ENCODE measurements at regions of chr17 and their contacts with region 1.

Region 1: DNA sequence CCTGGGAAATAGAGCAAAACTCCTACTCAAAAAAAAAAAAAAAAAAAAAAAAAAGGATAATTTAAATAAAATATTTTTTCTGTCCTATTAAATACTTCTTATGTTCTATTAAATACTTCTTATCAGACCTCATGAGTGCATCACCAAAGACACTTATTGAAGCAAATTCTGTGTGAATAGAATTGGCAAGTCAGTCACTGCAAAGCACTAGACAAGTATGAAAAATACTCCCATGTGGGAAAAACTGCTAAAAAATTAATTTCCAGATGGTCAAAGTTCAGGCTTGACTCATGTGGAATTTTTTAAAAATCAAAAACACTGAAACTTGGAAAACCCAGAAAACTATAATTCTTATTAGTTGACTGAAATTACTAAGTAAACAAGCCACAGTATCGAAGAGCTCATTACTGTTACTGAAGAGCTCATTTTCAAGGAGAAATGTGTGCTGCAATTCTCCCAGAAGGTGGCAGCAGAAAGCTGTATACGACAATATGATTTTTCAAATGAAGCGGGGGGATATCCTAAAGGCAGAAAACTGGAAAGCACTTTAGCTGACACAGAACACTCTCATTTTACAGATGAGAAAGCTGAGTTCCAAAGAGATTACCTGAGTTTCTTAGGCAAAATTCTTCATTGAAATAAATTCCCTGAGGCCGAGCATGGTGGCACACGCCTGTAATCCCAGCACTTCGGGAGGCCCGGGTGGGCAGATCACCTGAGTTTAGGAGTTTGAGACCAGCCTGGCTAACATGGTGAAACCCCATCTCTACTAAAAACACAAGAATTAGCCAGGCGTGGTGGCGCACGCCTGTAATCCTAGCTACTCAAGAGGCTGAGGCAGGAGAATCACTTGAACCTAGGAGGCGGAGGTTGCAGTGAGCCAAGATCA is 15.9 kb upstream of the FBXO47 start:
- DNase-seq: no peak
- ATAC-seq: peak; percentile 77

Region 2: GRCh38 chr17:38922538-38923297 is 60.4 kb before region 1 on chr17:
- intact Hi-C with region 1: no loop called
- DNase-seq: no peak
- ATAC-seq: peak; percentile 60

Region 3: DNA sequence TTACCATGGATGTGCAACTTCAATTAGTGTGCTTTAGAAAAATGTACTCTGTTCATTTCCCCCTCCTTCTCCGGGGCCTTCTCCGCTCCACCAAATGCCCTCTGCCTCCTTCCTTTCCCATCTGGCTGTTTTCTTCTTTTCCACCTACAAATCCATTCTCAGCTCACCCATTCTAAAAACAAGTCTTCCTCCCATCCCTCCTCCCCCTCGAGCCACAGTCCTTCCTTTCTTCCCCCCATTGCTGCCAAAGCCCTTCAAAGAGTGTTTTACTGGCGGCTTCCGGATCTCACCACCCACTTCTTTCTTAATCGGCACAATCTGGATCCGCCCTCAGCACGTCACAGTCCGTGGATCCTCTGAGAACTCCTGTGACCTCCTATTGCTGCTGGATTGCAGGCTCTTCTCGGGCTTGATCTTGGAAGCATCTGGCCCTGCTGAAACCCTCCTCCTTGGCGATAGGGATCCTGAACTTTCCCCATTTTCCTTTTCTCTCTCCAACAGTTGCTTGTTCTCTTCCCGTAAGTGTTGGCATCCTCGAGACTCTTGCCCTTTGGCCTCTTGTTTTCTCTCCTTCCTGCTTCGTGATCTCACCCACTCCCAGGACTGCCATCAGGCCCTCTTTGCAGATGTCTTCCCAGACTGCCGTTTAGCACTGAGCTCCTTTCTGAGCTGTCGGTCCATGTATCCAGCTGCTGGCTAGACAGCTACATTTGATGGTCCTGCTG is 20.1 kb after region 1 on chr17:
- intact Hi-C with region 1: no loop called
- DNase-seq: peak; percentile 89
- ATAC-seq: peak; percentile 90

Region 4: DNA sequence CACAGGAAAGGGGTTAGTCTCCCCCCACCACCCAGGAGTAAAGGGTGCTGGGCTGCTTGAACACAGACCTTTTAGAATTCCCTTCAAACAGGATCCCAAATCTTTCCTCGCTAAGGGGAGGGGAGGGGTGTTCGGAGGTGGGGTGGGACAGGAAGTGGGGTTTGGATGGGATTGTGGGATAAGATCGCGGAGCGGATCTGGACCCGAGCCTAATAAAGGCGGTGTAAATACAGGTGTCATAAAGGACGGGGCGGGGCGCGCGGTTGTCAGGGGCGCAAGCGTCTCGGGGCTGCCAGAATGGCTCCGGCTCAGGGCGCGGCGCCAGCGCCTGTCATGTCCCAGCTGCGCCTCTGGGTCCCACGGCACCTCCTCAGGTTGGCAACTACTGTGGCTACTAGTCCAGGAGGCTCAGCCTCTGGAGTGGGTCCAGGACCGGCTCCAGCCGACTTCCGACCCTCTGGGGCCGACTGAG is 43.9 kb after region 1 on chr17:
- intact Hi-C with region 1: loop called (anchors 1 kb)
- DNase-seq: peak; percentile 90
- ATAC-seq: peak; percentile 89

Region 5: DNA sequence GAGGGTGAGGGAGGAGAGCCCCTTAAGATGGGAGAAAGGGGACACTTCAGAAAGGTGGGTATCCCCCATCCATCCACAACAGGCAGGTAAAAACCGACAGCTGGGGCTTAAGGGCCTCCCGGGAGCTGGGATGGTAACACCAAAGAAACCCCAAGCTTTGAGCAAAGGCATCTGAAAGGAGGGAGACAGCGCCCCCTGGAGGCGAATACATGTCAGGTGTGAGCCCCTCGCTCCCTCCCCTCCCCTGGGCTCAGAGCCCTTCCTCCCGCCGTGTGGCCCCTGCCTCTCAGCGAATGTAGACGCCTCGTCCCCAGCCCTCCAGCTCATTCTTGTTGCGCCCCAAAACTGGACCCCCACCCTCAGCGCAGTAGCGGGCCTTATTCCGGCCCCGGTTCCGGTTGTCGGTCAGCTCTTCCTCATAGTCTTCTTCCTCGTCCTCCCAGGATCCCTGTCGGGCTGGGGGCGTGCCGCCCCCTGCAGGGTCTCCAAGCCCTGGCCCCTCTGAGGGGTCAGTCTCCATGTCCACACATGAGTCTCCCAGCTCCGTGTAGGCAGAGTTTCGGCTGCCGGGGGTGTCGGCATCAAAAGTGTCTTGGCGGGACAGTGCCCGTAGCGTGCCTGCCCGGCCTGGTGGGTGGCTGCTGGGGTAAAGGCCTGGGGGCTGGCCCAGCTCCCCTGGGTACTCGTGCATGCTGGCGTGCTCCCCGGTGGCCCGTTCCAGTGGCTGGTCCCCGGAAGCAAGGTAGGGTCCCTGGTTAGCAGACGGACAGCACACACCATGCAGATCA is 192.0 kb after region 1 on chr17:
- intact Hi-C with region 1: loop called (anchors 1 kb)
- DNase-seq: peak; percentile 87
- ATAC-seq: peak; percentile 81

Region 6: GRCh38 chr17:39244600-39245570 is 261.8 kb after region 1 on chr17:
- intact Hi-C with region 1: loop called (anchors 10 kb)
- DNase-seq: peak; percentile 91
- ATAC-seq: peak; percentile 90

Measured in Right ventricle myocardium inferior (tissue), 1 donor.